ENCODE measurements at regions of chr16 and their contacts with region 1.

Region 1: GRCh38 chr16:48704710-48705109 is 94.7 kb upstream of the N4BP1 start:
- DNase-seq: no peak
- H3K4me3 ChIP-seq: no peak overlapping the region
- H3K27ac ChIP-seq: no peak overlapping the region
- H3K4me1 ChIP-seq: no peaks in the 10 kb centered on the region
- H3K27me3 ChIP-seq: no peaks in the 10 kb centered on the region
- CTCF ChIP-seq: no peak

Region 2: DNA sequence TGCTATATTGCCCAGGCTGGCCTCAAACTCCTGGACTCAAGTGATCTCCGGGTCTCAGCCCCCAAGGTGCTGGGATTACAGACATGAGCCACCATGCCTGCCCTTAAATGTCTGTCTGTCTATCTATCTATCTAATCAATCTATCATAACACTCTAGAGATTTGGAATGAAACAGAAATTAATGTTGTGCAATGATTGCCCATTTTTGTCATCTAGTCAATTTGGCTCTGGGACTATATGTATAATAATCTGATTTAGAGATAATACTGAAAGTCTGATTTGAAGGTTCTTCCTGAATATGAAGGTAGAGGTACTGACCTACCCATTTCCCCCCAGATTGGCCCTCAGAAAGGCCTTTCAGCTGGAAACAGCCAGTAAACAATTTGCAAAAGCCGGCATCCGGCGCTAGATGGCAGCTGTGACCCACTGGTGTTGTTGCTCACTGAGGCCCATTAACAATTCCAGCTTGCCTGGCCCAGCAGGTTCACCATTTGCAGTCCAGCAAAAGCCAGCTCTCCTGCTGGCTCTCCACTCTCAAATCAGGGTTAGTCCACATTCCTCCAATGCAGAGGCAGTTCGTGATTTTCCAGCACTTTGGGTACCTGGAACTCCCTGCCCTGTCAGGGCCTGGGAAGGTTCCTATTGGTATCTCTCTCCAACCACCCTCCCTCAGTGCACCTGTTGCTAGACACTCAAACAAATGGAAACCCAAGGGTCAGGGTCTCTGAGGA is 1850.8 kb before region 1 on chr16:
- intact Hi-C with region 1: no loop called
- DNase-seq: peak; percentile 51 to 73
- H3K4me3 ChIP-seq: no peak overlapping the region
- H3K27ac ChIP-seq: no peak overlapping the region
- H3K4me1 ChIP-seq: peaks cover 0 to 10% (median 1%) of the 10 kb centered on the region in 4 donors
- H3K27me3 ChIP-seq: no peaks in the 10 kb centered on the region
- CTCF ChIP-seq: peak; percentile 63 to 77

Region 3: DNA sequence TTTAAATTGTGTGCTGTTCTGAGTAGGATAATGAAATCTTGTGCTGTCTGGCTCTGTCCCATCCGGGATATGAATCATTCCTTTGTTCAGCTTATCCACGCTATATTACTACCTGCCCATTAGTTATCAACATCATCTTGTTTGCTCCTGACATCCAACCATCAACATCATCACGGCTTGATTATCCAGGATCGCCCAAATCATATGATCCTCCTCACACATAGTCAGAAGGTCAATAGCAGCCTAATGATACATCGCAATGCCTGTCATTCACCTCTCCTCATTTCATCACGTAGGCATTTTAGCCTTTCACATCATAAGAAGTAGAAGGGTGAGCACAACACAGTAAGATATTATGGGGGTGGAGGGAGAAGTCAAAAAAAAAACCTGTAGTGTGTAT is 242.5 kb before region 1 on chr16:
- intact Hi-C with region 1: no loop called
- DNase-seq: no peak
- H3K4me3 ChIP-seq: no peak overlapping the region
- H3K27ac ChIP-seq: no peak overlapping the region
- H3K4me1 ChIP-seq: no peaks in the 10 kb centered on the region
- H3K27me3 ChIP-seq: no peaks in the 10 kb centered on the region
- CTCF ChIP-seq: no peak

Region 4: DNA sequence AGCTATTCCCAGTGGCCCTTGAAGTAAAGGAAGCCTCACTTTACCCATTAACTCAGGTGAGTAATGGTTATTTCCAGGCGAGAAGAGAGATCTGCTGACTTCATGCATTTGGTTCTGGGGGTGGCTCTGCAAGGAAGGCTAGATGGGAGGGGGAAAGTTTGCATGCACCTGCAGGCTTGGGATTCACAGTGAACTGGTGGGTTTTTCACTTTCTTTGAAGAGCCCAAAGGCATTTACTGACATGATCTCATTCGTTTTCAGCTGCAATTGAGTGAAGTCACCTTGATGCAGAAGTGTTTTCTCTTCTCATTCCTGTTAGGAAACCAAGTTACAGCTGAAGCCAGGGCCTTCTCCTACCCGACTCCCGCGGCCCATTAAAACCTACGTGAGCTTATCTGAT is 36.3 kb after region 1 on chr16:
- intact Hi-C with region 1: loop called (anchors 1 kb)
- DNase-seq: no peak
- H3K4me3 ChIP-seq: no peak overlapping the region
- H3K27ac ChIP-seq: no peak overlapping the region
- H3K4me1 ChIP-seq: no peaks in the 10 kb centered on the region
- H3K27me3 ChIP-seq: no peaks in the 10 kb centered on the region
- CTCF ChIP-seq: no peak

Region 5: DNA sequence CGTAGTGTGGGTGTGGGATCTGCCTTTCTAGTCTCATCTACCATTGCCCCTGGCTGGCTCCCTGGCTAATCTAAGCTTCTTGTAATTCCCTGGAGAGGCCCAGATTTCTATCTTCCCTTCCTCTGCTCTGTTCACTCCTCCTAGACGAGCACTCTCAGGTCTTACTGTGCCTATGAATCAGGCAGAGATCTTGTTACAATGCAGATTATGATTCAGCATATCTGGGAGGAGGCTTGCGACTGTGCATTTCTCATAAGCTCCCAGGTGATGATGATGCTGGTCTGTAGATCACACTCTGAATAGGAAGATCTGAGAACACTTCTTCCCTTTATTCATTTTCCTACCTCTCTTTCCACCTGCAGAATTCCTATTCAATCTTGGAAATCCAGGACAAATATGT is 376.8 kb after region 1 on chr16:
- intact Hi-C with region 1: no loop called
- DNase-seq: no peak
- H3K4me3 ChIP-seq: no peak overlapping the region
- H3K27ac ChIP-seq: no peak overlapping the region
- H3K4me1 ChIP-seq: no peaks in the 10 kb centered on the region
- H3K27me3 ChIP-seq: no peaks in the 10 kb centered on the region
- CTCF ChIP-seq: no peak

Region 6: DNA sequence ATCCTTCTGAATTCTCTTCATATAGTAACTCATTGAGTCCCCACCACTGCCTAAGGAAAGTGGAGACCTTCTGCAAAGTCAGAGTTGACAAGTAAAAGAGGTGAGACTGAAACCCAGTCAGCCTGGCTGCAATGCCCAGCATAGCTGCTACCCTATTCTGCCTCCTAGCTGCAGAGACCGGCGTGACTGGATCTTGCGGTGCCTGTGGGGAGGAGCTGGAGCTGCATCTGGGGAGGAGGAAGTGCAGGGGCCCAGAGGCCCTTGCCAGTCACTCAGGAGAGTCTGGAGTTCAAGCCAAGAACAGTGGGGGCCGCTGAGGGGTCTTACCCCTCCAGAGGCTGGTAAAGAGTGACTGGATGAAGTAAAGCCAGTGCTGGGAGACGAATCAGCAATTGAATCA is 1186.2 kb after region 1 on chr16:
- intact Hi-C with region 1: loop called (anchors 10 kb)
- DNase-seq: no peak
- H3K4me3 ChIP-seq: no peak overlapping the region
- H3K27ac ChIP-seq: no peak overlapping the region
- H3K4me1 ChIP-seq: no peaks in the 10 kb centered on the region
- H3K27me3 ChIP-seq: peaks cover 0 to 21% of the 10 kb centered on the region in 2 donors
- CTCF ChIP-seq: no peak

Measured in tibial artery (tissue), 4 donors.